ENCODE measurements at regions of chr1 and their contacts with region 1.

Region 1: DNA sequence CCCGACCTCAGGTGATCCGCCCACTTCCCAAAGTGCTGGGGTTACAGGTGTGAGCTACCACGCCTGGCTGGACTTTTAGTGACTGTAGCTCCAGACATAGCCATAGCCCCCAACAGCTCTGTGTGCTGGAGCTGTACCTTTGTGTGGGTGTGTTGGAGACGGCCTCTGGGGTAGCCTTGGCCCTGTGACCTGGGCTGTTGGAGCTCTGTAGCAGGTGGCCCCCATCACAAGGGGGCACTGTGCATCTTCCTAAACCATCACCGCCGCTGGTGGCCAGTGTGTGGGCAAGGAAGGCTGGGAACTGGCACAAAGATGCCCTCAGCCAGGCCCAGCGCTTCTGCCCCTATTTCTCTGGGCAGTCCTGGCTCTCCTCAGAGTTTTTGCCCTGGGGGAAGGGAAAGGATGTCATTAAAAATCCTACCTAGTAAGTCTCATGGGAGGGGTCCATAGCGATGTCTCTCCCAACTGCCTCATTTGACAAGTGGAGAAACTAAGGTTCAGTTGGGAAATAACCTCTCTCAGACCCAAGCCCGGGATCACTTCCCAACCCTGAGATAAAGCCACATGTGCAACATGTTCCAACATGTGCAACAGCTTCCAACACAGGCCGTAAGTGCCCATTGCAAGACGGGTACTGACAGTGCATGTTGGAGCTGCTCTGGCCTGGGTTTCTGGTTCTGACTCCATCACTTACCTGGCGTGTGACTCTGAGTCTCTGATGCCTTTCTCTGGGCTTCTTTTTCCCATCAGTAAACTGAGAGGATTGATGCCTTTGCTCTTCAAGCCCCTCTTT is 38.2 kb upstream of the FOXO6 start:
- DNase-seq: peak; percentile 79
- H3K4me3 ChIP-seq: no peak overlapping the region
- H3K27ac ChIP-seq: no peak overlapping the region
- H3K4me1 ChIP-seq: peaks cover 0 to 17% of the 10 kb centered on the region in 2 experiments; a peak in 1 of 4 replicates
- H3K27me3 ChIP-seq: no peaks in the 10 kb centered on the region
- CTCF ChIP-seq: peak; percentile 60
- EP300 ChIP-seq: no peak
- RAD21 ChIP-seq: peak; percentile 81

Region 2: DNA sequence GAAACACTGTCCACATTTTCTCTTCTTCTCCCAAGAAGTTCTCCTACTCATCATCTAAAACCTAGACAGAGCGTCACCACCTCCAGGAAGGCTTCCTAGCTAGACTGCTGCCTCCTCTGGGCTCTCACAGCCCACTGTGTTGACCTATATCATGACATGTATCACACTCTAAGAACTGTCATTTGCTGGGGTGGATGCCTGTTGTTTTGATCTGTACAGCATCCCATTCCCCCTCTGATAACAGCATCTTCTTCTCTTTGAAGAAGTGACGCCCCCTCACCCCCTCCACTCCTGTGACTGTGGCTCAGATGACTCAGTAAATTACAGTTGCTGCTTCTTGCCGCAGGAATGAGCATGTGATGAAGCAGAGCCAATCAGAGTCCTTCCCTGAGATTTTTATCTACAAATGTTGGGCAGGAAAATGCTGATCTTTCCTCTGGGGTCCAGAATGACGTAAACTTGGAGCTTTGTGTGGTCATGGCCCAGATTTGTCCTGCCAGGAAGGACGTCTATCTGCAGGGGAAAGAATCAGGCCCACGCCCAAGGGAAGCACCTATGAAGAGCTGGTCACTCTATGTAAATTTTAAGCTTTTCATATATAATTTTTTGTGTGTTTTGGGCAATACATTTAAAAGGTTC is 10.2 kb after region 1 on chr1:
- CTCF ChIA-PET with region 1: no interaction called
- POLR2A ChIA-PET with region 1: no interaction called
- DNase-seq: no peak
- H3K4me3 ChIP-seq: no peak overlapping the region
- H3K27ac ChIP-seq: no peak overlapping the region
- H3K4me1 ChIP-seq: peaks cover 0 to 12% of the 10 kb centered on the region in 2 experiments; a peak in 1 of 4 replicates
- H3K27me3 ChIP-seq: no peaks in the 10 kb centered on the region
- CTCF ChIP-seq: no peak
- EP300 ChIP-seq: no peak
- RAD21 ChIP-seq: no peak

Region 3: DNA sequence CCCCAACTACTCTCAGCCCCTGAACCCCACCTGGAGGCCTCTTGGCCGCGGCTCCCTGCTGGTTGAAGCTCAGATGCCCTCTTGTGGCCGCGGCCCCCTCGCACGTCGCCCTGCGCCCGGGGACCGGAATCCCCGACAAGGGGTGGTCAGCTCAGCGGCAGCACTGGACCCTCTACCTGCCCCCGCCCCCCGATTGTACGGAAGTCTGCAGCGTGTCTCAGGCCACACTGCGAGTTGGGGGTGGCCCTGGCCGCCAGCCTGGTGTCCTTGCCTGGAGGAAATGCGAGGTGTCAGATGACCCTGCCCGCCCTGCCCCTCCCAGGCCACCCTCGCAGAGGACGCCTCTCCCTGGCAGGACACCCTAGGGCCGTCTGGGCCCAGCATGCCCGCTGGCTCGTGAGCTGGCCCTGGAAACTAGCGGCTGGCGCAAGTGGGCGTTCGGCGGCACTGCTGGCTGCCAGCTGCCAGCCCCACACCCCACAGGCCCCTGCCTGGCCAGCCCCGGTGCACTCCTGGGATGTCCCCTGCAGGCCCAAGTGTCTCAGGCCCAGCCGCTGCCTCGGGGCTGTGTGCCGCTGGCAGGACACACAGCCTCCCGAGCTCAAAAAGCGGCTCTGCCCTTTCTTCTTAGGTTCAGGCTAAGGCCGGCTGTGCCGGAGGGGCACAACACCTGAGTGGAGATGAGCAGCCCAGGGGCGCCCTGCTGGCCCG is 100.6 kb after region 1 on chr1:
- CTCF ChIA-PET with region 1: interaction called, 109 read pairs
- POLR2A ChIA-PET with region 1: no interaction called
- DNase-seq: peak; percentile 72
- H3K4me3 ChIP-seq: no peak overlapping the region
- H3K27ac ChIP-seq: no peak overlapping the region
- H3K4me1 ChIP-seq: peaks cover 8 to 17% of the 10 kb centered on the region in 2 experiments; a peak in 3 of 4 replicates
- H3K27me3 ChIP-seq: no peaks in the 10 kb centered on the region
- CTCF ChIP-seq: peak; percentile 40
- EP300 ChIP-seq: no peak
- RAD21 ChIP-seq: peak; percentile 45

Region 4: DNA sequence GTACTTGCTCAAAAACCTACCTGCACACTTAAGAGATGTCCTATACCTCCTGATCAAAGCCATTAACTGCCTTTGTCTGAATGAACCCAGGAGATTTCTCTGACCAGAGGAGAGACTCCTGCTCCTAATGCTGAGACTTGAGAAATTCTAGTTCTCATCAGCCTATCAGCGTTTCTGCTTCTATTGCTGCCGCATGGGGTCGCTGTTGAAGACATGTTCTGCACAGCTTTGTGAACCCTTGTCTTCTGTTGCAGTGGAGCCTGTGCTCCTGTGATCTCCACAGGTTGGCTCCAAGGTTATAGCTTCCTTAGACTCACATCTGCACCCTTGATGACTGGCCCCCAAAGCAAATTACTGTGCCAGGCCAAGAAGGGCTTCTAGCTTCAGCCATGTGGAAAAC is 121.2 kb after region 1 on chr1:
- CTCF ChIA-PET with region 1: no interaction called
- POLR2A ChIA-PET with region 1: no interaction called
- DNase-seq: no peak
- H3K4me3 ChIP-seq: no peak overlapping the region
- H3K27ac ChIP-seq: no peak overlapping the region
- H3K4me1 ChIP-seq: peaks cover 21 to 39% of the 10 kb centered on the region in 2 experiments
- H3K27me3 ChIP-seq: no peaks in the 10 kb centered on the region
- CTCF ChIP-seq: peak; percentile 41
- EP300 ChIP-seq: no peak
- RAD21 ChIP-seq: no peak